Activated T-helper 2 cell treated with anti-CD3 and anti-CD28 coated beads, Interferon-gamma antibody, Interleukin-2, Interleukin-4, amounts not matched to agents 10 μg/mL and 5 μg/mL and 100 μg/mL, durations not matched to agents 14 hours and 24 hours and 36 hours (primary cell): ENCODE measurements at regions of chr7 and their contacts with region 1.

Region 1: GRCh38 chr7:54215424-54215823 is 326.8 kb upstream of the VSTM2A start:
- DNase-seq: no peak
- H3K4me3 Mint-ChIP-seq: no peak overlapping the region
- H3K27ac Mint-ChIP-seq: no peak overlapping the region
- H3K4me1 Mint-ChIP-seq: no peaks in the 10 kb centered on the region
- H3K27me3 Mint-ChIP-seq: no peaks in the 10 kb centered on the region

Region 2: DNA sequence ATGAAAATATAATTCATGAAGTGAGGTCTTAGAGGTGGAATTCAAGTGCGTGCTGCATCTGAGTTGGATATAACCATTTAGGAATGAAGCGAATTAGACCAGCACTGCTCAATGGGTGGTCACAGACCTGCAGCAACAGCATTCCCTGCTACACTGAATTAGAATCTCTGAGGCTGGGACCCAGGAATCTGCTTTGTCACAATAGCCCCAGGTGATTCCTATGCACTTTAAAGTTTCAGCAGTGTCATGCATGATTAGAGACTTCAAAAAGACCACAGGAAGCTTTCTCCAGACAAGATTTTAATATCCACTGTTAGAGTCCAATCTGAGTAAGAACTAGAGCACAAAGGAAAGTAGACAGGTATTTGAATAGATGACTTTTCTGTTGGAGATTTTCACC is 26.1 kb before region 1 on chr7:
- intact Hi-C with region 1: no loop called
- DNase-seq: no peak
- H3K4me3 Mint-ChIP-seq: no peak overlapping the region
- H3K27ac Mint-ChIP-seq: no peak overlapping the region
- H3K4me1 Mint-ChIP-seq: no peaks in the 10 kb centered on the region
- H3K27me3 Mint-ChIP-seq: no peaks in the 10 kb centered on the region

Region 3: DNA sequence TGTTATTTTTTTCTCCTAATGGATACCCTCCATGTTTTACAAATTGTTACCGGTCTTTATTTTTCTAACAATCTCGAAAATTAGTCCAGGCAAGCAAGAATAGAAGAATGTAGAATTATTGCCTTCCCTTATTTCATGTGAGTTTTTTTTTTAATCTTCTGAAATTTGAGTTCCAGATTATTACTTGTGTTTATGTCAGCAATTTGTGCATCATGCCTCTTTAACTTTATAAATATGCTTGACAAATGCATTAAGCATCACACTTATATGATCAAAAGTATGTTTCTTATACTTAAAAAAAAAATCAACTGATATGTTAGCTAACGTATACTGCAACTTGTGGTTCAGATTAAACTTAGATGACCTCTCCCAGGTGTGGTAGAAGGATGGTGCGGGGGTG is 84.0 kb after region 1 on chr7:
- intact Hi-C with region 1: loop called (anchors 10 kb)
- DNase-seq: no peak
- H3K4me3 Mint-ChIP-seq: no peak overlapping the region
- H3K27ac Mint-ChIP-seq: no peak overlapping the region
- H3K4me1 Mint-ChIP-seq: no peaks in the 10 kb centered on the region
- H3K27me3 Mint-ChIP-seq: no peaks in the 10 kb centered on the region